ENCODE measurements at regions of chr4 and their contacts with region 1.

Region 1: DNA sequence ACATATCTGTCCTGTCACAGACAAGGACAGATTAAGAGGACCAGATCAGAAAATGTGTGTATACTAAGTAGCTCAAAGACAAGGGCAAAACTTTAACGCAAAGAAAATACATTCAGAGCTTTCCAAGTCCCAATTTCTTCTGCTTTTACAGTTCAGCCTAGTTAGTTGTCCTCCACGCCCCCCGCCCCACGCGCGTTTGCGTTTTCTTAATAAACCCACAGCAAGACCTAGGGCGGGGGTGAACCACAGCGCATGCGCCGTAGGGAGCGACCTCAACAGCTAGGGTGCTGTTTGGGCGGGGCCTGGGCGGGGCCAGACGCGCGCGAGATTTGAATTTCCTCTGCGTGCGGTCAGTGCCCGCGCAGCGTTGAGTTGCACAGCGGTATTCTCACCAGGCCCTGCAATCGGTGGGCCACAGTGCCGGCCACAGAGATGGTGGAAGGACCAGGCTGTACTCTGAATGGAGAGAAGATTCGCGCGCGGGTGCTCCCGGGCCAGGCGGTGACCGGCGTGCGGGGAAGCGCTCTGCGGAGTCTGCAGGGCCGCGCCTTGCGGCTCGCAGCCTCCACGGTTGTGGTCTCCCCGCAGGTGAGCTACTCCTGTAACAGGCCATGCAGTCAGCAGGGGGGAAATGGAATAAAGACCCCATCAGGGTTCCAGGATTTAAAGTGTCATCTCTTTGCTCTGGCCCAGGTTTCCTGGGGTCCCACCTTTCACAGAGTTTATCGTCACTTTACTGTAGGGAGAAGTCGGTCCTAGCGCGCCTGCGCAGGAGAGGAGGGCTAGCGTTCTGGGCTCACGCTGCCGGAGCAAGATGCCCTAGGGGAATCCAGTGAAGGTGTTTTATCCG is at the start of gene NEIL3:
- DNase-seq: peak; percentile 93
- ATAC-seq: peak; percentile 89
- H3K4me3 Mint-ChIP-seq: peak within 1 kb of the TSS; percentile 96
- H3K27ac Mint-ChIP-seq: peak within 1 kb of the TSS; percentile 99
- H3K4me1 Mint-ChIP-seq: peaks cover 35% of the 10 kb centered on the region
- H3K27me3 Mint-ChIP-seq: no peaks in the 10 kb centered on the region
- total RNA-seq, gene NEIL3: 23.2 to 24.0 TPM

Region 2: GRCh38 chr4:177052211-177052934 is 257.4 kb before region 1 on chr4:
- POLR2A ChIA-PET with region 1: no interaction called
- DNase-seq: no peak
- ATAC-seq: no peak
- H3K4me3 Mint-ChIP-seq: no peak overlapping the region
- H3K27ac Mint-ChIP-seq: no peak overlapping the region
- H3K4me1 Mint-ChIP-seq: no peaks in the 10 kb centered on the region
- H3K27me3 Mint-ChIP-seq: peaks cover 9% of the 10 kb centered on the region

Region 3: DNA sequence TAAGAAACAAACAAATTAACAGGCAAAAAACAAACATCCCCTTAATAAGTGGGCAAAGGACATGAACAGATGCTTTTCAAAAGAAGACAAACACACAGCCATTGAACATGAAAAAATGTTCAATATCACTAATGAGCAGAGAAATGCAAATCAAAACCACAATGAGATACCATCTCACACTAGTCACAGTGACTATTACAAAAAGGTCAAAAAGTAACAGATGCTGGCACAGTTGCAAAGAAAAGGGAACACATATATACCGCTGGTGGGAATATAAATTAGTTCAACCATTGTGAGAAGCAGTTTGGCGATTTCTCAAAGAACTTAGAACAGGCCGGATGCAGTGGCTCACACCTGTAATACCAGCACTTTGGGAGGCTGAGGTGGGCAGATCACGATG is 146.2 kb before region 1 on chr4:
- POLR2A ChIA-PET with region 1: no interaction called
- DNase-seq: no peak
- ATAC-seq: no peak
- H3K4me3 Mint-ChIP-seq: no peak overlapping the region
- H3K27ac Mint-ChIP-seq: no peak overlapping the region
- H3K4me1 Mint-ChIP-seq: no peaks in the 10 kb centered on the region
- H3K27me3 Mint-ChIP-seq: no peaks in the 10 kb centered on the region

Region 4: DNA sequence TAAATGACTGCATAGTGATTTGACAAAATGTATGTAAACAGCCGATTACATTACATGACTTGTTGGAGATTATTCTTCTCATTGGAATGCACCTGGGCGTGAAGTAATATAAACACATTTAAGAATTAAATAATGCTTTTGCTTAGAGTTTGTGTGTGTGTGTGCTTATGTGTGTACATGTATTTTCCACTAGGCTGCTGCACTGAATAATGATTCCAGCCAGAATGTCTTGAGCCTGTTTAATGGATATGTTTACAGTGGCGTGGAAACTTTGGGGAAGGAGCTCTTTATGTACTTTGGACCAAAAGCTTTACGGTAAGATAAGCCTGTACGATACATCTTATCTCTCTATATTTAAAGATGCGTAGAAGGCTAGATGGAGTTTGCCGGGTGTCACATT is 12.5 kb after region 1 on chr4:
- POLR2A ChIA-PET with region 1: interaction called, 10 read pairs
- DNase-seq: no peak
- ATAC-seq: no peak
- H3K4me3 Mint-ChIP-seq: no peak overlapping the region
- H3K27ac Mint-ChIP-seq: no peak overlapping the region
- H3K4me1 Mint-ChIP-seq: peaks cover 35% of the 10 kb centered on the region
- H3K27me3 Mint-ChIP-seq: no peaks in the 10 kb centered on the region

Measured in activated naive CD8-positive, alpha-beta T cell treated with anti-CD3 and anti-CD28 coated beads, Interleukin-2, amount 10 ng/mL, durations not matched to agents 7 days and 5 days (primary cell).